ENCODE measurements at regions of chr3 and their contacts with region 1.

Region 1: GRCh38 chr3:50542177-50543034 is 25.1 kb downstream of the C3orf18 start:
- DNase-seq: peak; percentile 28
- H3K4me3 Mint-ChIP-seq: no peak overlapping the region
- H3K27ac Mint-ChIP-seq: no peak overlapping the region
- H3K4me1 Mint-ChIP-seq: no peaks in the 10 kb centered on the region
- H3K27me3 Mint-ChIP-seq: peaks cover 19% of the 10 kb centered on the region

Region 2: DNA sequence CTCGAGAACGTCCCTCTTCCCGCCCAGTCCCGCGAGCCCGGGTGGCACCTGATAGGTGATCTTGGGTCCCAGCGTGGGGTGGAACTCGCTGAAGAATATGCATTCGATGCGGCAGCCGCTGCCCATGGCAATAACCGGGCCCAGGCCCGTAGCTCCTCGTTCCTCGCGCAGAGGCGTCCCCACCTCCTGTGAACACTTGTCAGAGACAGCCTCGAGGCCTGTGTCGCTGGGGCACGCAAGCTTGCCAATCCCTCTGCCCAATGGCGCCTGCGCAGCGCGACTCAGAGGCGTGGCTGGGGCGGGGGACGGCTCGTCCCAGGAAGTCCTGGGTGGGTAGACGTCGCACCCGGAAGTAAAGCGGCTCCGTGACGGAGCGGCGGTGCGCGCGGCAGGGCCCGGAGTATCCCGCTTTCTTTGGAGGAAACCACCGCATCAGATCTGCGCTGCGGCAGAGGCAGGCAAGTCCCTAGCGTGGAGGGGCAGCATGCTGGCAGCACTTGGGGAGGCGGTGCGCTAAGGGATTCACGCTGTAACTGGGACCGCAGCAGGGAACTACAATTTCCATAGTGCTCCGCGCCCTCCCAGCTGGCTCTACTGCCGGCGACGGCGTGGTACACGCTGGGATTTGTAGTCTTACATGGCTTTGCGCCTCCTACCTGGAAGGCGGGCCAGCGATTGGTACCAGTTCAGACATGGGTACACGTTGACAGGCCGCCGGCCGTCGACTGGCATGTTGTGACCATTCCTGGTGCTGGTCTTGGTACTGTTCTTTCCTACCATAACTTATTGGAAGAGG is 191.7 kb before region 1 on chr3 and contains the starts of genes CYB561D2 and NPRL2:
- intact Hi-C with region 1: loop called (anchors 1 kb)
- DNase-seq: peak; percentile 100
- H3K4me3 Mint-ChIP-seq: peak within 1 kb of the TSS; percentile 95
- H3K27ac Mint-ChIP-seq: peak within 1 kb of the TSS; percentile 95
- H3K4me1 Mint-ChIP-seq: peaks cover 55% of the 10 kb centered on the region
- H3K27me3 Mint-ChIP-seq: no peaks in the 10 kb centered on the region
- total RNA-seq, gene CYB561D2: 30.0 and 35.9 TPM in 2 replicates
- total RNA-seq, gene NPRL2: 43.7 and 46.6 TPM in 2 replicates

Region 3: DNA sequence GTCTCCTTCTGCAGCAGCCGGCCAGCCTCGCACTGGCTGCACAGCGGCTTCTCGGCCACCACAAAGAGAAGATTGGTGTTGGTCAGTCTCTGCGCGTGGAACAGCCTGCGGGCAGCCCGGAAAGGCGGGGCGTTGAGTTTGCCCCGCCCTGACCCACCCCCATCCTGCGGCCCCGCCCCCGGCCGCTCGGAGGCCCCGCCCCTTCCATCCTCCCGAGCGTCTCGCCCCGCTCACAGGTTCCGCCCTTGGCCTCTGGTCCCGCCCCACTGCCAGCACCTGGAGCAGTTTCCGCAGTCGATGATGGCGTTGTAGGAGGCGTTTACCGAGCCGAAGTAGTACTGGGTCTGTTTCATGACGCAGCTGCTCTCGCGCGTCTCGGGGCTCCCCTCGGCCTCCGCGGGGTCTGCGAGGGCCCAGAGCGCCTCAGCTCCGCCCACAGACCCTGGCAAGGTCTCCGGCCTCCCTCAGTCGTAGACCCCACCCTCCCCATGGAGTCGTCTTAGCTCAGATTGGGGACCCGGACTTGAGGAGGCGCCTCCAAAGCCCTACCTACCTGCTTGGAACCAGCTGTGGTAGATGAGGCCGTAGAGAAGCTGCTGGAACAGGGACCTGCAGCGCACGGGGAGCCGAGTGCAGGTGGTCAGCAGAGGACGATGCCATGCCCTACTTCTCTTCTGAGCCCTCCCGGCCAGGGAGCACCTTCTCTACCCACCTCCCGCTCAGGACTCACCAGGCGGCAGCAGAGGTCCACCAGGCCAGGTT is 177.1 kb before region 1 on chr3:
- intact Hi-C with region 1: loop called (anchors 5 kb)
- DNase-seq: peak; percentile 93
- H3K4me3 Mint-ChIP-seq: peak overlapping the region; percentile 79
- H3K27ac Mint-ChIP-seq: peak overlapping the region; percentile 70
- H3K4me1 Mint-ChIP-seq: peaks cover 13% of the 10 kb centered on the region
- H3K27me3 Mint-ChIP-seq: peaks cover 4% of the 10 kb centered on the region

Region 4: DNA sequence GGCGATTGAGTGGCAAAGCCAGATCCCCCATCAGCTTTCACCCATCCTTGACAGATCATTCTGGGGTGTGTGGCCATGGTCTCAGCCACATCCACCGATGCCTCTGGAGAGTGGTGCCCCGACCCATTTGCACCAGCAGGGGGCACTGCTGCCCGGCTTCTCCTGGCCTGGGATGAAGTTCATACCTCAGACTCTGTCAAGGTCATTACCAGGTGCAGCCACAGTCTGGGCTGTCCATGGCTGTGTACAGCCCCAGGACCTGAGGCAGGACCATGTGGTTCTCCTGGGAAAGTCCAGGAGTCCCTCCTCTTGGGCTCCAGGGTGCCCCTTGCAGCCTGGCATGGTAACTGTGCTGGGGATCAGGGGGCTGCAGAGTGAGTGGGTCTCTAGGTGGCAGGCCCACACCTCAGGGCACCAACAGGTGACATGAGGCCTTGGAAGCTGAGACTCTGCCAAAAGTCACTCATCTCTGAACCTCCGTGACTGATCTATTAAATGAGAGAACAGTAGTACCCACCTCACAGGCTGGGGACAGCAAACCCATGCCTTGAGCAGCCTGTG is 106.2 kb before region 1 on chr3:
- intact Hi-C with region 1: loop called (anchors 1 kb)
- DNase-seq: peak; percentile 67
- H3K4me3 Mint-ChIP-seq: no peak overlapping the region
- H3K27ac Mint-ChIP-seq: no peak overlapping the region
- H3K4me1 Mint-ChIP-seq: peaks cover 5% of the 10 kb centered on the region
- H3K27me3 Mint-ChIP-seq: peaks cover 2% of the 10 kb centered on the region

Region 5: DNA sequence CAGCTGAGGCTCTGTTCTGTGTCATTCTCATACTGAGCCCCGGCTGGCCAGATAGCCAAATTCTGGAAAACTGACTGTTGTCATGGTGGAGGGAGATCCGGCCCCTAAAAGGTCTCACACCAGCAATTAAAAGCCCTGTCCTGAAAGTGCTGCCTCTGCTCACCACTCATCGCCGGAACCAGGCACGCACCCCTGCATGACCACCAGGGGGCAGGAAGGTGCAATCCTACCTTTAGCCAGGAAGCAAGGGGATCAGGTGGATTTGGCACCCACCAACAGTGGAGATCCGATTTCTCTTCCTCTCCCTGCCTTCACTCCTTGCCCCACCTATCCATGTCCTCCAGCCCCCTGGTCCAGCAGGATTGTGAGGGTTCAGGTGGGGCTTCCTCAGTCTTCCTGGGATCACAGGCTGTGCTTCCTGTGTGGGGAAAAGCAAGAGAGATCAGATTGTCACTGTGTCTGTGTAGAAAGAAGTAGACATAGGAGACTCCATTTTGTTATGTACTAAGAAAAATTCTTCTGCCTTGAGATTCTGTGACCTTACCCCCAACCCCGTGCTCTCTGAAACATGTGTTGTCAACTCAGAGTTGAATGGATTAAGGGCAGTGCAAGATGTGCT is 22.8 kb before region 1 on chr3:
- intact Hi-C with region 1: loop called (anchors 1 kb)
- DNase-seq: peak; percentile 64
- H3K4me3 Mint-ChIP-seq: no peak overlapping the region
- H3K27ac Mint-ChIP-seq: no peak overlapping the region
- H3K4me1 Mint-ChIP-seq: peaks cover 5% of the 10 kb centered on the region
- H3K27me3 Mint-ChIP-seq: peaks cover 11% of the 10 kb centered on the region

Region 6: GRCh38 chr3:50525987-50526386 is 16.4 kb before region 1 on chr3:
- intact Hi-C with region 1: loop called (anchors 1 kb)
- DNase-seq: peak; percentile 55
- H3K4me3 Mint-ChIP-seq: no peak overlapping the region
- H3K27ac Mint-ChIP-seq: no peak overlapping the region
- H3K4me1 Mint-ChIP-seq: no peaks in the 10 kb centered on the region
- H3K27me3 Mint-ChIP-seq: peaks cover 20% of the 10 kb centered on the region

Measured in activated T-helper 1 cell treated with anti-CD3 and anti-CD28 coated beads, Interleukin-12 subunit alpha, Interleukin-12 subunit beta, Interleukin-2, Interleukin-4 antibody, amounts not matched to agents 30 ng/mL and 10 ng/mL and 1 ng/mL, durations not matched to agents 14 hours and 24 hours and 36 hours (primary cell).